ENCODE measurements at regions of chr1 and their contacts with region 1.

Region 1: GRCh38 chr1:6245086-6245868 is 1.3 kb downstream of the HES3 start:
- DNase-seq: peak; percentile 90
- ATAC-seq: peak; percentile 71
- H3K4me3 Mint-ChIP-seq: no peak overlapping the region
- H3K27ac Mint-ChIP-seq: no peak overlapping the region
- H3K4me1 Mint-ChIP-seq: peaks cover 11% of the 10 kb centered on the region
- H3K27me3 Mint-ChIP-seq: peaks cover 53% of the 10 kb centered on the region

Region 2: DNA sequence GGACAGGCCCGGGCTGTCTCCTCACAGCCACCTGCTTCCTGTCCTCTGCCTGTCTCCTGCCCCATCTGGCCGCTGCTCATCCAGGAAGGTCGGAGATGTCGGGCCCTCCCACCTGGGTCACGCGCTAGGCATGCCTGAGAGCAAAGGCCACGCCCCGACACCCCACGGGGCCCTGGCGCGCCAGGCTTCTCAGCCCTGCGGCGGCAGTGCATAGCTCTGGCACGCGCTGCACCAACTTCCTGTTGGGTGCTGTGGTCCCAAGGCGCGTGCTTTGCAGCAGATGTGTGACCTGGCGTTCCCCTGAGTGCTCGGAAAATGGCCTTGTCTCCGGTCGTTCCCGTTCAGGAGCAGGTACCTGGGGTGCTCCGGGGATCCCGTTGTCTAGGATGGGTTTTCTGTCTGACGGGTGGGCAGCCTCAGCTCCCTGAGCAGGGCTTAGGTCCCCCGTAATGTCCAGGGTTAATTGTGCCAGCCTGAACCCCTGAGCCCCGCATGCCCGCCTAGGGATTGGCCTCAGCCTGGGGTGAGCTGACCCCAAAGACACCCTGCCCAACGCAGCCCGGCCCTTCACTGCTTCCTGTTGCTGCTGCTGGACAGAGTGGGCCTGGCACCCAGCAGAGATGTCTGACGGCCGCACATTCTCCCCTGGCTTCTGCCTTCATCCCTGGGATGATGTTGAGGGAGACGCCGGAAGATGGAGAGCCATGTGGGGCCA is 219.0 kb before region 1 on chr1:
- CTCF ChIA-PET with region 1: no interaction called
- POLR2A ChIA-PET with region 1: no interaction called
- intact Hi-C with region 1: no loop called
- DNase-seq: peak; percentile 97
- ATAC-seq: peak; percentile 81
- H3K4me3 Mint-ChIP-seq: peak overlapping the region; percentile 97
- H3K27ac Mint-ChIP-seq: peak overlapping the region; percentile 97
- H3K4me1 Mint-ChIP-seq: peaks cover 40% of the 10 kb centered on the region
- H3K27me3 Mint-ChIP-seq: no peaks in the 10 kb centered on the region

Region 3: GRCh38 chr1:6052543-6053205 is 192.6 kb before region 1 on chr1:
- CTCF ChIA-PET with region 1: interaction called, 3 read pairs
- POLR2A ChIA-PET with region 1: no interaction called
- intact Hi-C with region 1: loop called in 1 of 2 experiments (anchors 2 kb)
- DNase-seq: peak; percentile 71
- ATAC-seq: no peak
- H3K4me3 Mint-ChIP-seq: no peak overlapping the region
- H3K27ac Mint-ChIP-seq: no peak overlapping the region
- H3K4me1 Mint-ChIP-seq: peaks cover 4% of the 10 kb centered on the region
- H3K27me3 Mint-ChIP-seq: no peaks in the 10 kb centered on the region

Region 4: DNA sequence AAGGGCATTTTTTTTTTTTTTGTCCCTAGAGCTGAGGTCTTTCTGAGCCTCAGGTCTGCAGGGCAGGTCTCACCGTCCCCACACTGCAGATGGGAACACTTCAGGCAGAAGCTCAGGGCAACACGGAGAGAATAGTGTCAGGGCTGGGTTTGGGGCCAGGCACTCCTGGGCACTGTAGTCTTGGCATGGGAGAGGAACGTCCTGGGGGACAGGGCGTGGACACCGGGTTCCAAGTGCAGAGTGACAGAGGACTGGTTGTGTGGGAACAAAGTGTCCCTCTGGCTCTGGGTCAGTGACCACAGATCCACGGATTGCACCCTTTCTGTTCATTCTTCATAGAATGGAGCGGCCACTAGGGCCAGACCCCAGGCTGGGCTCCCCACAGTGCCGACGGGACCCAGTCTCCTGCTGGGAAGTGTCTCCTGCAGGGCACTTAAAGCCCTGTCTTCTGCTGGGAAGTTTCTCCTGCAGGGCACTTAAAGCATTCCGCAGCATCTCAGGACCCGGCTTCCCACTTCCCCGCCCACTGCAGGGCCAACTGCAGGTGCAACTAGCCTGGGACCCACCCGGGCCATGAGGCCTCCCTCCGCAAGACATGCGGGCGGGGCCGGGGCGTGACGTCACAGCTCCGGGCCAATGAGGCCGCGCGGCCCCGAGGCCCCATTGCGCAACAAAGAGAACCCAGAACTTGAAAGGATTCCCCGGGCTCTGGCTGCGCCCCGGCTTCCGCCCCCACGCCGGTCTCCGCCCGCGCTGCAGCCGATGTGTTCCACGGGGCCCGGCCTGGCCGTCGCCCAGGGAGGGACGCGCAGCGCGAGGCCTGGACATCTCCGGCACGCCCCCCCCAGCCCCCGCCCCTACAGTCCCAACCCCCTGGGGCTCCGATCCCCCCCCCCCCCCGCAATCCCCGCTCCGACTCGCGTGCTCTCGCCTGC is 14.5 kb after region 1 on chr1:
- CTCF ChIA-PET with region 1: interaction called, 14 read pairs
- POLR2A ChIA-PET with region 1: no interaction called
- intact Hi-C with region 1: loop called in 1 of 2 experiments (anchors 1 kb)
- DNase-seq: peak; percentile 86
- ATAC-seq: peak; percentile 53
- H3K4me3 Mint-ChIP-seq: no peak overlapping the region
- H3K27ac Mint-ChIP-seq: no peak overlapping the region
- H3K4me1 Mint-ChIP-seq: peaks cover 3% of the 10 kb centered on the region
- H3K27me3 Mint-ChIP-seq: peaks cover 3% of the 10 kb centered on the region

Region 5: GRCh38 chr1:6401673-6402072 is 156.4 kb after region 1 on chr1:
- CTCF ChIA-PET with region 1: interaction called, 12 read pairs
- POLR2A ChIA-PET with region 1: no interaction called
- intact Hi-C with region 1: loop called (anchors 1 kb)
- DNase-seq: no peak
- ATAC-seq: no peak
- H3K4me3 Mint-ChIP-seq: no peak overlapping the region
- H3K27ac Mint-ChIP-seq: no peak overlapping the region
- H3K4me1 Mint-ChIP-seq: no peaks in the 10 kb centered on the region
- H3K27me3 Mint-ChIP-seq: peaks cover 2% of the 10 kb centered on the region

Region 6: DNA sequence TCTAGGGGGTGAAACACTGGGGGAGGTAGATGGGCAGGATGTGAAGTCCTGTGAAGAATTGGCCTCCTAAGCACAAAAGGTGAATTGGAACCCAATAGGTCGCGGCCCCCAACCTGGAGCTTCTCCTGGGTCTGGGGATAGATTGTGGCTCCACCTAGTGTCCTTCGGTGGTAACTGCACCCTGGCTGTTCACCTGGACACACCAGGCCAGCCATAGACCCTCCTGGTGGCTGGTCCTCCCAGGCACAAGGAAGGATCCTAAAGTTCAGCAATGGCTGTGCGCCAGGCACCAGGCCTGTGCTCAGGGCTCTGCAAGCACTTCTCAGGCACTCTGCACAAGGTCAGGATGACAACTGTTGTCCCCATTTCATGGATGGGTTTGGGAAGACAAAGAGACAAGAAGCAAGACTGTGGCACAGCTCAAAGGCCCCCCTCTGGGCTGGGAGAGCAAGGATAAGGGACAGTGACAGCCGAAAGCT is 192.8 kb after region 1 on chr1:
- CTCF ChIA-PET with region 1: interaction called, 7 read pairs
- POLR2A ChIA-PET with region 1: no interaction called
- intact Hi-C with region 1: loop called in 1 of 2 experiments (anchors 5 kb)
- DNase-seq: peak; percentile 85
- ATAC-seq: peak; percentile 72
- H3K4me3 Mint-ChIP-seq: no peak overlapping the region
- H3K27ac Mint-ChIP-seq: no peak overlapping the region
- H3K4me1 Mint-ChIP-seq: peaks cover 2% of the 10 kb centered on the region
- H3K27me3 Mint-ChIP-seq: peaks cover 16% of the 10 kb centered on the region

Region 7: DNA sequence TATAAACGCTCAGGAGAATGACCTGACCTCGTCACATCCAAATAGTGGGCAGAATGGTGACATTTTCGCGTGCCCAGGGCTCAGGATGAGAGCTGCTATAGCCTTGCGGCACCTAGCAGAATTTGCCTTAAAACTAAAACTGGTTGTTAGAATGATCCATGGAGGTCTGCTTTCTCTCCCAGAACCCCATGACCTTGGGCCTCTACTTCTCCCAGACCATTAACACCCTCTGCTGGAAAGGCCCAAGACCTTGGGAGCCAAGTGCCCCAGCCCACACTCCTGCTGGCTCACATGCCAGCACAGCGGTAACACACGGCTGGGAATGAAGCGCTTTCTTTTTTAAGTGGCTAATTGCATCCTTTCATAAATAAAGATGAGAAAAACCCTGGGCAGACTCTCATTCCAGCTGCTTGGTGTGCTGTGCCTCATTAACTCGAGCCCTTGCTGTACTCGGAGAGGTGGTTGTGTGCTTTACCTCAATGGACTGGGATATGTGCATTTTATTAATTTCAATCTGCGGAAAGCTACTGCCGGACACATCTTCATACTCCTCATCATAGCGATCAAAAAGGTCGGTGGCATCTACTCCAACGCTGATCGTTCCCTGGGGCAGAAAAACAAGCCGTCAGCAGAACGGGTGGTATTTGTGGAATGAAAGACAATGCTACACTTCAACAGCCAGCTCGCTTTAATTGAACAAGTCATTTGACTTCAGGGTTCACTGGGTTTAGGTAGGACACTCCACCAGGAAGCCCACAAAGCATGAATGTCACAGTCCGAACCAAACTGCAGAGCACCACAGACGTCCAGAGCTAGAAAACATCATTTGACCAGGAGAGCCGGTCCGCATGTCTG is 408.4 kb after region 1 on chr1:
- CTCF ChIA-PET with region 1: no interaction called
- POLR2A ChIA-PET with region 1: no interaction called
- intact Hi-C with region 1: no loop called
- DNase-seq: no peak
- ATAC-seq: no peak
- H3K4me3 Mint-ChIP-seq: no peak overlapping the region
- H3K27ac Mint-ChIP-seq: no peak overlapping the region
- H3K4me1 Mint-ChIP-seq: peaks cover 6% of the 10 kb centered on the region
- H3K27me3 Mint-ChIP-seq: no peaks in the 10 kb centered on the region

Measured in activated CD4-positive, alpha-beta T cell treated with anti-CD3 and anti-CD28 coated beads for 36 hours (primary cell).